ENCODE measurements at regions of chr22 and their contacts with region 1.

Region 1: GRCh38 chr22:31630331-31631329 is 31.4 kb downstream of the PISD start:
- DNase-seq: peak; percentile 91
- H3K4me3 Mint-ChIP-seq: peak overlapping the region; percentile 84
- H3K27ac Mint-ChIP-seq: peak overlapping the region; percentile 94
- H3K4me1 Mint-ChIP-seq: peaks cover 56% of the 10 kb centered on the region
- H3K27me3 Mint-ChIP-seq: no peaks in the 10 kb centered on the region

Region 2: DNA sequence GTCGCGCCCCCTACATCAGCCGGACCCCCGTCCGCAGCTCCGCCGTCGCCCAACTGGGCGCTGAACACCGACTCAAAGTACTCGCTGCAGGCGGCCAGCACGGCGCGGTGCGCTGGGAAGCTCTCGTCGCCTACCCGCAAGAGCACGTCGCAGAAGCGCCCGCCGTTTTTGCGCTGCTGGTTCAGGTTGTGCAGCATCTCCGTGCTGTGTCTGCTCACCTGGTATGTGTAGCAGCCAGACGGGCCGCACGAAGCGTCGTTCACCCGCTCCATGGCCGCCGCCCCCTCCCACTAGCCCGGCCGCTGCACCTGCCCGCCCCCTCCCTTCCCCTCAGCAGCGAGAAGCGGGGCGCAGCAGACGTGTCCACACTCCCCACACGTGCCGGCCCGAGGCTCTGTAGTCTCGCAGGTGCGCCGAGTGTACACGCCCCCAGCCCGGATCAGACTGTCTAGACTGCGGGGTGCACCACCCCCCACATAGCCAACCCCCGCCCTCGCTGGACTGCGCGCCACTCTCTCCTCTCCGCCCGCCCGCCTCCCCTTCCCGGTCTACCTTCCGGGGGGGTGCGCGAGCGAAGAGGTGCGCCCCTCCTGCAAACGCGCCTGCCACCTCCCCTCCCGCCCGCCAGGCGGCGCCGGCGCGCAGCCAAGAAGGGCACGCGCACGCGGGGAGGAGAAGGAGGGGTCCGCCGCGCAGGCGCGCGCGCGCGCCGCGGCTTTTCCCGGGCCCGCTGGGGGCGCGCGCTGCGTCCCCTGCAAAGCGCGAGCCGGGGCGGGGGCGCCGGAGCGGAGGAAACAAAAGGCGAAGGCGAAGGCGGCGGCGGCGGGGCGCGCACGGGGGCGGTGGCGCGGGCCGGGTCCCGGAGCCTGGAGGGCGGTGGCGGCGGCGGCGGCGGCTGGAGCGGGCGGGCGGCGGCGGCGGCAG is 285.0 kb before region 1 on chr22:
- CTCF ChIA-PET with region 1: no interaction called
- intact Hi-C with region 1: loop called (anchors 1 kb)
- DNase-seq: peak; percentile 86
- H3K4me3 Mint-ChIP-seq: peak overlapping the region; percentile 90
- H3K27ac Mint-ChIP-seq: peak overlapping the region; percentile 94
- H3K4me1 Mint-ChIP-seq: peaks cover 42% of the 10 kb centered on the region
- H3K27me3 Mint-ChIP-seq: no peaks in the 10 kb centered on the region

Region 3: GRCh38 chr22:31451709-31452571 is 178.7 kb before region 1 on chr22:
- CTCF ChIA-PET with region 1: interaction called, 6 read pairs
- intact Hi-C with region 1: loop called (anchors 1 kb)
- DNase-seq: peak; percentile 13
- H3K4me3 Mint-ChIP-seq: no peak overlapping the region
- H3K27ac Mint-ChIP-seq: no peak overlapping the region
- H3K4me1 Mint-ChIP-seq: no peaks in the 10 kb centered on the region
- H3K27me3 Mint-ChIP-seq: no peaks in the 10 kb centered on the region

Region 4: GRCh38 chr22:31496007-31496734 is 134.5 kb before region 1 on chr22 and contains the start of gene SFI1:
- CTCF ChIA-PET with region 1: interaction called, 5 read pairs
- intact Hi-C with region 1: loop called (anchors 1 kb)
- DNase-seq: peak; percentile 95
- H3K4me3 Mint-ChIP-seq: peak within 1 kb of the TSS; percentile 94
- H3K27ac Mint-ChIP-seq: peak within 1 kb of the TSS; percentile 94
- H3K4me1 Mint-ChIP-seq: peaks cover 55% of the 10 kb centered on the region
- H3K27me3 Mint-ChIP-seq: no peaks in the 10 kb centered on the region
- total RNA-seq, gene SFI1: 147 to 155 TPM

Region 5: GRCh38 chr22:31585161-31585859 is 45.3 kb before region 1 on chr22:
- CTCF ChIA-PET with region 1: interaction called, 3 read pairs
- intact Hi-C with region 1: loop called (anchors 1 kb)
- DNase-seq: peak; percentile 28
- H3K4me3 Mint-ChIP-seq: no peak overlapping the region
- H3K27ac Mint-ChIP-seq: no peak overlapping the region
- H3K4me1 Mint-ChIP-seq: peaks cover 50% of the 10 kb centered on the region
- H3K27me3 Mint-ChIP-seq: no peaks in the 10 kb centered on the region